ENCODE measurements at regions of chr9 and their contacts with region 1.

Region 1: DNA sequence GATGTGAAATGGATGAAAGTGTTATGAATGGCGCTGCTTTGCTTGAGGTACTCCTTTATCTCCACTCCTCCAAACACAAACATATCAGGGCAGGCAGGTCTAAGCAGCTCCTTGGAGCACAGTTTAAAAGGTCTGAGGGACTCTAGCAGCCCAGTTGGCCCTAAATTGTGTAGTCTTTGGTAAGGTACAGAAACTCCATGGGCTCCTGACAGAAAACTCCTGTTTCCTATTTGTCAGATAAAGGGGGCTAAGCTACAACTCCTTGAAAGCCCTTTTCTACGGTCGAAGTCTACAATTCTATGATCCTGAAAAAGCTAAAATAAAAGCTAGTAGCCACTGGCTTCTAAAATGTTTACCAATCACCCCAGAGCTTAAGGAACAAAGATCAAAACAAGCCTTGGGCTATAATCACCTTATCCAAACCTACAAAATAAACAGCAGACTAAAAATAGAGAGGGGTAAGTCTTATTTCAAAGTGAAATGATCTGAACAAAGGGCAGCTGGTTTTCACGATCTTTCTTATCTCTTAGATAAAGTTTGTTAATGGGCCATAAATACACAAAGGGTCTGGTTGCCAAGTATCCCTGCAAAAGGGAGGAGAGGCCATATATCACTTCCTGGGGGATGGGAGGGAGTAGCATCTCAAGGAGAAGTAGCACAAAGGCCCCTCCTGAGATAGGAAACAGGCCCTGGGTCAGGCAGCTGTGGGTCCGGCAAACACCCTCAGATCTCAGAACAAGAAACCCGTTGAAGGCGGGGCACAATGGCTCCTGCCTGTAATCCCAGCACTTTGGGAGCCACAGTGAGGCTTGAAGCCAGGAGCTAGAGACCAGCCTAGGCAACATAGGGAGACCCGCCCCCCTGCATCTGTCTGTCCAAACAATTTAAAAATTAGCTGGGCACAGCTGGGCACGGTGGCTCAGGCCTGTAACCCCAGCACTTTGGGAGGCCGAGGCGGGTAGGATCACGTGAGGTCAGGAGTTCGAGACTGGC is 28.3 kb upstream of the DENND4C start:
- DNase-seq: peak; percentile 88 to 95
- H3K4me3 ChIP-seq: no peak overlapping the region
- H3K4me3 Mint-ChIP-seq: peak overlapping the region; percentile 54
- H3K27ac Mint-ChIP-seq: peak overlapping the region; percentile 85
- H3K4me1 ChIP-seq: peaks cover 48% of the 10 kb centered on the region
- H3K4me1 Mint-ChIP-seq: peaks cover 13% of the 10 kb centered on the region
- H3K27me3 ChIP-seq: no peaks in the 10 kb centered on the region
- H3K27me3 Mint-ChIP-seq: no peaks in the 10 kb centered on the region
- CTCF ChIP-seq: no peak

Region 2: GRCh38 chr9:19048966-19049916 is 153.0 kb before region 1 on chr9 and contains the start of gene RRAGA:
- CTCF ChIA-PET with region 1: no interaction called
- POLR2A ChIA-PET with region 1: no interaction called
- intact Hi-C with region 1: loop called (anchors 1 kb)
- DNase-seq: peak; percentile 96 to 97
- H3K4me3 ChIP-seq: peak within 1 kb of the TSS; percentile 77
- H3K4me3 Mint-ChIP-seq: peak within 1 kb of the TSS; percentile 85
- H3K27ac Mint-ChIP-seq: peak within 1 kb of the TSS; percentile 93
- H3K4me1 ChIP-seq: peaks cover 7% of the 10 kb centered on the region; the same call in 1 of the 2 replicates
- H3K4me1 Mint-ChIP-seq: no peaks in the 10 kb centered on the region
- H3K27me3 ChIP-seq: no peaks in the 10 kb centered on the region
- H3K27me3 Mint-ChIP-seq: no peaks in the 10 kb centered on the region
- CTCF ChIP-seq: peak; percentile 70
- total RNA-seq, gene RRAGA: 37.8 and 44.7 TPM in 2 replicates

Region 3: GRCh38 chr9:19145881-19146280 is 56.3 kb before region 1 on chr9:
- CTCF ChIA-PET with region 1: no interaction called
- POLR2A ChIA-PET with region 1: no interaction called
- intact Hi-C with region 1: no loop called
- DNase-seq: no peak
- H3K4me3 ChIP-seq: no peak overlapping the region
- H3K4me3 Mint-ChIP-seq: no peak overlapping the region
- H3K27ac Mint-ChIP-seq: no peak overlapping the region
- H3K4me1 ChIP-seq: peaks cover 4% of the 10 kb centered on the region
- H3K4me1 Mint-ChIP-seq: peaks cover 10% of the 10 kb centered on the region
- H3K27me3 ChIP-seq: no peaks in the 10 kb centered on the region
- H3K27me3 Mint-ChIP-seq: no peaks in the 10 kb centered on the region
- CTCF ChIP-seq: no peak

Region 4: GRCh38 chr9:19161257-19162025 is 40.8 kb before region 1 on chr9:
- CTCF ChIA-PET with region 1: no interaction called
- POLR2A ChIA-PET with region 1: no interaction called
- intact Hi-C with region 1: loop called (anchors 1 kb)
- DNase-seq: peak; percentile 84 to 87
- H3K4me3 ChIP-seq: no peak overlapping the region
- H3K4me3 Mint-ChIP-seq: no peak overlapping the region
- H3K27ac Mint-ChIP-seq: peak overlapping the region; percentile 82
- H3K4me1 ChIP-seq: peaks cover 35% of the 10 kb centered on the region
- H3K4me1 Mint-ChIP-seq: no peaks in the 10 kb centered on the region
- H3K27me3 ChIP-seq: no peaks in the 10 kb centered on the region
- H3K27me3 Mint-ChIP-seq: no peaks in the 10 kb centered on the region
- CTCF ChIP-seq: no peak

Region 5: DNA sequence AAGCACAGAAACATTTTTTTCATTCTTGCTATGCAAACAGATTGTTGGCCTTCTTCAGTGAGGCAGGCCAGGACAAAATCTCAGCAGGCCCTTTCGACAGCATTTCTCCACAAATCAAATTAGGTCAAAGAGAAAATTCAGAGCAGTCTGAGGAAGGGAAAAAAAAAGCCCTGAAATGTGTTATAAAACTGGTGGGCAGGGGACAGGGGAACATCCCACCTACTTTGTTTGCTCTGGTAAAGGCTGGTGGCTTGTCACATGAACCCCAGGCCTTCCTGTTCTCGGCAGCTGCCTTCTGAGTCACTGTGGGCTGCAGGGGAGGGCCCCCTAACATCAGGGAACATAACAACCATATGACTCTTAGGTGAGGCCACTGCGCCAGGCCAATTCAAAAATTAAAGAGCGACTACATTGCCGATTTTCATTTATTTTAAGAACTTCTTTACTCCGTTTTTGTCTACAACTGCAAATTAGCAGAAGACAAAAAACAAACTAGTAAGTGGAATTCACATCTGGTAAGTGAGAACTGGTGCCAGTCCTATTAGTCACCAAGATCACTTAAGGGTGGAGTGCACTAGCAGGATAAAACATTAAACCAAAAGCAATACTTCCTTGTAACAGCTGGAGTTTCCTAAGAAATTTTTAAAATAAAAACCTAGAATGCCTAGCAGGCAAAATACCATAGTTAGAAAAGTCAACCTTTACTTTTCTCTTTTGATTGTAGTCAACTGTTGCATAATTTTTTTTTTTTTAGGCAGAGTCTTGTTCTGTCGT is 17.9 kb before region 1 on chr9:
- CTCF ChIA-PET with region 1: no interaction called
- POLR2A ChIA-PET with region 1: no interaction called
- intact Hi-C with region 1: loop called (anchors 1 kb)
- DNase-seq: peak; percentile 46 to 69
- H3K4me3 ChIP-seq: no peak overlapping the region
- H3K4me3 Mint-ChIP-seq: peak overlapping the region; percentile 29
- H3K27ac Mint-ChIP-seq: peak overlapping the region; percentile 89
- H3K4me1 ChIP-seq: peaks cover 26% of the 10 kb centered on the region
- H3K4me1 Mint-ChIP-seq: no peaks in the 10 kb centered on the region
- H3K27me3 ChIP-seq: no peaks in the 10 kb centered on the region
- H3K27me3 Mint-ChIP-seq: no peaks in the 10 kb centered on the region
- CTCF ChIP-seq: no peak

Region 6: DNA sequence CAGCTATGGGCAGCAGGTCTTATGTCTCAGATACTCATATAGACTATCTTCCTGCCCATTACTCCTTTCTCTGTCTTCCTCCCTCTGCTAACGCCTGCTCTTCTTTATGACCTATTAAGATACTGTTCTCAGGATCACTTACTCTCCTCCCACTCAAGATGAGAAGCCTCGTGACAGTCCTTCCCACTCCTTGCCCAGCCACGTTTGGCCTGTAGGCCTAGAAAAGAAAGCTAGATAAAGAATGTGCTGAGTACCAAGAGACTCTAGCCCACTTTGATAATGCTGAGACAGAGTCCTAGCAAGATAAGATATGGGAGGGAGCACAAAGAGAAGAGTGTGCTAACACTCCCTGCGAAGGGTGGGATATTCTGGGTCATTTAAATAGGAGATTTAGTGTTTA is 21.5 kb after region 1 on chr9:
- CTCF ChIA-PET with region 1: no interaction called
- POLR2A ChIA-PET with region 1: interaction called, 3 read pairs
- intact Hi-C with region 1: loop called (anchors 1 kb)
- DNase-seq: peak in 1 of 2 experiments; percentile 44
- H3K4me3 ChIP-seq: no peak overlapping the region
- H3K4me3 Mint-ChIP-seq: peak overlapping the region; percentile 4
- H3K27ac Mint-ChIP-seq: peak overlapping the region; percentile 83
- H3K4me1 ChIP-seq: peaks cover 35% of the 10 kb centered on the region
- H3K4me1 Mint-ChIP-seq: peaks cover 6% of the 10 kb centered on the region
- H3K27me3 ChIP-seq: no peaks in the 10 kb centered on the region
- H3K27me3 Mint-ChIP-seq: no peaks in the 10 kb centered on the region
- CTCF ChIP-seq: no peak

Region 7: GRCh38 chr9:19230356-19231125 is 28.3 kb after region 1 on chr9 and contains the start of gene DENND4C:
- CTCF ChIA-PET with region 1: no interaction called
- POLR2A ChIA-PET with region 1: interaction called, 16 read pairs
- intact Hi-C with region 1: loop called (anchors 1 kb)
- DNase-seq: peak; percentile 89 to 94
- H3K4me3 ChIP-seq: peak within 1 kb of the TSS; percentile 85
- H3K4me3 Mint-ChIP-seq: no peak within 1 kb of the TSS
- H3K27ac Mint-ChIP-seq: no peak within 1 kb of the TSS
- H3K4me1 ChIP-seq: peaks cover 14% of the 10 kb centered on the region
- H3K4me1 Mint-ChIP-seq: no peaks in the 10 kb centered on the region
- H3K27me3 ChIP-seq: no peaks in the 10 kb centered on the region
- H3K27me3 Mint-ChIP-seq: no peaks in the 10 kb centered on the region
- CTCF ChIP-seq: no peak
- total RNA-seq, gene DENND4C: 40.1 and 46.9 TPM in 2 replicates

Region 8: DNA sequence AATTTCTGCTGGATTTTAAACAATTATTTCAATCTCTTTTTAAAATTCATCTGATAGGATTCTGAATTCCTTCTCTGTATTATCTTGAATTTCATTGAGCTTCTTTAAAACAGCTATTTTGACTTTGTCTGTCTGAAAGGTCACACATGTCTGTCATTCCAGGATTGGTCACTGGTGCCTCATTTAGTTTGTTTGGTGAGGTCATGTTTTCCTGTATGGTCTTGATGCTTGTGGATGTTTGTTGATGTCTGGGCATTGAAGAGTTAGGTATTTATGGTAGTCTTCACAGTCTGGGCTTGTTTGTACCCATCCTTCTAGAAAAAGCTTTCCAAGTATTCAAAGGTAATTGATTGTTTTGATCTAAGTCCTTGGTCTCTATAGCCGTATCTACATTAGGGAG is 67.4 kb after region 1 on chr9:
- CTCF ChIA-PET with region 1: no interaction called
- POLR2A ChIA-PET with region 1: interaction called, 3 read pairs
- intact Hi-C with region 1: loop called (anchors 5 kb)
- DNase-seq: no peak
- H3K4me3 ChIP-seq: no peak overlapping the region
- H3K4me3 Mint-ChIP-seq: no peak overlapping the region
- H3K27ac Mint-ChIP-seq: no peak overlapping the region
- H3K4me1 ChIP-seq: no peaks in the 10 kb centered on the region; the same call in 1 of the 2 replicates
- H3K4me1 Mint-ChIP-seq: peaks cover 4% of the 10 kb centered on the region
- H3K27me3 ChIP-seq: no peaks in the 10 kb centered on the region
- H3K27me3 Mint-ChIP-seq: no peaks in the 10 kb centered on the region
- CTCF ChIP-seq: no peak

Measured in Caco-2 (cell line).